IMR-90 (cell line): ENCODE measurements at regions of chr2 and their contacts with region 1.

Region 1: DNA sequence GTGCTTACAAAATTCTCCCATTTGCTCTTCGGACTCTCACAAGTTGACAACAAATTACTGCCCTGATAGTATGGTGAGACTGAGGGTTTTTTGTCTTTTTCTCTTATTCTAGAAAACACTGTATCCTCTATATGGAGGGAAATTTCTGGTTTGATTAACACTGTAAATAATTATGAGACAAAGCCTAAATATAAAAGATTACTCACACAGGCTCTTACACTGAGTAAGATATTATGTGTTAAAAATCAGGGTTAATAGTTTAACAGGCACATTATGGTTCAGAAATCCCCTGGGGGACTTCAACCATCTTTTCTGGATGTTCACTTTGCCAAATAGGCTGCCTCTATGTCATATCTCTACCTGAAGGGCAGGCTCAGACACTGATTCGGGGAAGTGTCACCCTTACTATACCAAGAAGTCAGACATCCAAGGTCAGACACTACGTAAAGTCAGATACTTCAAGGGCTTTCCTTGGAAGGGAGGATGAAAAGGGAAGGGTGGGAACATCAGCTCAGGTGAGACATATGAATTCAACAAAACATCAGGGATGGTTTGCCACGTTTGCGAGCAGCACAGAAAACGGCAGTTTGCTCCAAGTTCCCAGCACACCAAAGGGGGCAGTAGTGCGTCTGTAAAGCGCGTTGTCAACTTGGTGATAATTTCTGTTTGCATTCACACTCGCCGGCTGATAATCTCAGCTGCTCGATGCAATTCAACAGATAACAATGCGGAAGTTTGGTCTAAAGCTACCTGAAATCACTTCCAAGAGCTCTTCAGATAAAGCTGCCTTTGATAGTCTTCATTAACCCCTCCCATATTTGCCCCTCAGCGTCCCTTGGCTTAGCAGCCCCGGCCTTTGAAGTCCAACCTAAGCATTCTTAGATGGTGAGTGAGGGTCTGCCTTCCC is 972 bp upstream of the RASGRP3 start:
- DNase-seq: peak; percentile 83
- ATAC-seq: peak; percentile 79
- H3K4me3 ChIP-seq: peak overlapping the region; percentile 52
- H3K27ac ChIP-seq: peak overlapping the region; percentile 42
- H3K4me1 ChIP-seq: peaks cover 2% of the 10 kb centered on the region
- H3K27me3 ChIP-seq: no peaks in the 10 kb centered on the region
- CTCF ChIP-seq: peak; percentile 78
- POLR2A ChIP-seq: no peak
- RAD21 ChIP-seq: peak; percentile 63

Region 2: DNA sequence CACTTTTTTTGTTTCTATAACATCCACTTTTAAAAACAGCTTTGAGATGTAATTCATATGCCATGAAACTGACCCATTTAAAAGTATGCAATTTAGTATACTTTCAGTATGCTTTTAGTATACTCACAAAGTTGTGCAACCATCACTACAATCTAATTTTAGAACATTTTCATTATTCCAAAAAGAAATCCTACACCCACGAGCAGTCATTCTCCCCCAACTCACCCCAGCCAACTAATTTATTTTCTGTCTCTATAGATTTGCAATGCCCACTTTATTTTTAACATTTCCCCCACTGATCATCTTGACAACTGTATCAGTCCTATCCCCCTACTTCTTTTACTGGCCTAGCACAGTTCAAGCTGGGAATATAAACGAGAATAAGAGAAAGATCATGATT is 84.5 kb after region 1 on chr2:
- CTCF ChIA-PET with region 1: no interaction called
- POLR2A ChIA-PET with region 1: no interaction called
- dilution Hi-C with region 1: no loop called
- in situ Hi-C with region 1: no loop called
- intact Hi-C with region 1: loop called (anchors 5 kb)
- DNase-seq: no peak
- ATAC-seq: peak; percentile 11
- H3K4me3 ChIP-seq: no peak overlapping the region
- H3K27ac ChIP-seq: no peak overlapping the region
- H3K4me1 ChIP-seq: peaks cover 11% of the 10 kb centered on the region
- H3K27me3 ChIP-seq: no peaks in the 10 kb centered on the region
- CTCF ChIP-seq: no peak
- POLR2A ChIP-seq: no peak
- RAD21 ChIP-seq: no peak

Region 3: DNA sequence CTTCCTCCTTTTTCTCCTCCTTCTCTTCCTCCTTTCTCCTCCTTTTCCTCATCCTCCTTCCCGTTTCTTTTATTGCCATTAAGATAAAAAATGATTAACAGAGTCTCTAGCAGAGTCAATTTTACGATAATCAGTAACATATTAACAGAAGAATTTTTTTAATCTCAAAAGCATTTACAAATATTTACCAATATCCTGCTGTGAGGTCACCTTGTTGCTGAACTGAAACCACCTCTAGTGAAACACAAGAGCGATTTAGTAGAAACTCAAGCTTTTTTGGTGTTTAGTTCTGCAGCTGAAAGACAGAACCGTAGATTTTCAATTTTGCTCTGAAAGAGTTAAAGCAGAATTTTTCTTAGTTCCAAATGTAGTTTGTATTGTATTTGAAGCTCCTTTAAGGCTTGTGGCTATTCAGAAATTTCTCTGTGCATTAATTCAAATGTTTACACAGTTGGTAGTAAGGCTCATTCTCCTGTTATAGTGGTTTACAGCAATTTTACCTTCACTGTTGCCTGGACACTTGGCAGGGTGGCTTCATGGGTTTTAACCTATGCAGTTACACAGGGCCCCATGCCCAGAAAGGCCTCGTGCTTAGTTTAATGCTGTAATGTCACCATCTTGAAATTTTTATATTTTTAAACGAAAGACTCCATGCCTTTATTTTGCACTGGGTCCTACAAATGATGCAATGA is 1230.2 kb after region 1 on chr2:
- CTCF ChIA-PET with region 1: no interaction called
- POLR2A ChIA-PET with region 1: no interaction called
- dilution Hi-C with region 1: no loop called
- in situ Hi-C with region 1: no loop called
- intact Hi-C with region 1: no loop called
- DNase-seq: no peak
- ATAC-seq: no peak
- H3K4me3 ChIP-seq: no peak overlapping the region
- H3K27ac ChIP-seq: no peak overlapping the region
- H3K4me1 ChIP-seq: no peaks in the 10 kb centered on the region
- H3K27me3 ChIP-seq: no peaks in the 10 kb centered on the region
- CTCF ChIP-seq: no peak
- POLR2A ChIP-seq: no peak
- RAD21 ChIP-seq: no peak